Posterior vena cava (tissue), 2 donors: ENCODE measurements at regions of chr12 and their contacts with region 1.

Region 1: DNA sequence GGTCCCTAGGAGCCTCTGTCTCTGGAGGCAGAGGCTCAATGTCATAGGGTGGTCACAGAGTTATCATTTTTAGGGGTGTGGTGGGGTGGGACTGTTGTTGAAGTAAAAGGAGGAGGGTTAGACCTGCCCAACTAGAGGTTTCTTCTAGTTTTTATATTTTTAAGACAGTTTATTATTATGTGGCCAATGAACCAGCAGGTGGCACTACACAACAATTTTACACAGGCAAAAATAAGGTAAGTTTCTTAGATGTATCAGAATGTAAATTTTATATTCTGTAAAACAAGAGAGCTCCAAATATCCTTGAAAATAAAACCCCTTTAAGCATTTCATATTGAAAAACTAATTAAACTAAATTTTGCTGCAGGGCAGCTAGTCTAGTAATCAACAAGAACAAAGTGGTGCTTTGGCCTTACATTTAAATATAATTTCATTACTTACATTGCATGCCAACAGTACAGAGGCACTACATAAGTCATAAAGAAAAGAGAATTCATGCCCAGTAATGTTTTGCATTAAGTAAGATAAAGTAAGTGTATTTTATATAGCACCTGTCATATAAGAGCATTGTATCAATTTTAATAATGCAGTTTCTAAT is 22.2 kb upstream of the OVCH1 start:
- DNase-seq: no peak

Region 2: GRCh38 chr12:29545102-29545467 is 25.4 kb after region 1 on chr12:
- intact Hi-C with region 1: no loop called
- DNase-seq: no peak

Region 3: GRCh38 chr12:30806989-30807694 is 1287.5 kb after region 1 on chr12:
- intact Hi-C with region 1: loop called in 1 of 2 experiments (anchors 10 kb)
- DNase-seq: no peak